Right ventricle myocardium inferior (tissue), 1 donor: ENCODE measurements at regions of chr4 and their contacts with region 1.

Region 1: GRCh38 chr4:162645381-162645780 is 481.6 kb upstream of the FSTL5 start:
- DNase-seq: no peak
- ATAC-seq: no peak

Region 2: GRCh38 chr4:162523171-162523570 is 122.2 kb before region 1 on chr4:
- intact Hi-C with region 1: no loop called
- DNase-seq: no peak
- ATAC-seq: no peak

Region 3: DNA sequence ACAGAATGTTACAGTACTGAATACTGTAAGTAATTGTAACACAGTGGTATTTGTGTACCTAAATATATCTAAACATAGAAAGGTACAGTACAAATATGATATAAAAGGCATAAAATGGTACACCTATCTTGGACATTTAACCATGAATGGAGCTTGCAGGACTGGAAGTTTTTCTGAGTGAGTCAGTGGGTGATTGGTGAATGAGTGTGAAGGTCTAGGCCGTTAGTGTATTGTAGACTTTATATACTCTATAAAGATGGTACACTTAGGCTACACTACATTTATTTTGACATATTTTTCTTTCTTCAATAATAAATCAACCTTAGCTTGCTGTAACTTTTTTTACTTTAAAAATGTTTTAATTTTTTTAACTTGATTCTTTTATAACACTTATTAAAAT is 59.1 kb before region 1 on chr4:
- intact Hi-C with region 1: no loop called
- DNase-seq: no peak
- ATAC-seq: no peak

Region 4: GRCh38 chr4:163042306-163042705 is 396.9 kb after region 1 on chr4:
- intact Hi-C with region 1: loop called (anchors 5 kb)
- DNase-seq: no peak
- ATAC-seq: no peak

Region 5: DNA sequence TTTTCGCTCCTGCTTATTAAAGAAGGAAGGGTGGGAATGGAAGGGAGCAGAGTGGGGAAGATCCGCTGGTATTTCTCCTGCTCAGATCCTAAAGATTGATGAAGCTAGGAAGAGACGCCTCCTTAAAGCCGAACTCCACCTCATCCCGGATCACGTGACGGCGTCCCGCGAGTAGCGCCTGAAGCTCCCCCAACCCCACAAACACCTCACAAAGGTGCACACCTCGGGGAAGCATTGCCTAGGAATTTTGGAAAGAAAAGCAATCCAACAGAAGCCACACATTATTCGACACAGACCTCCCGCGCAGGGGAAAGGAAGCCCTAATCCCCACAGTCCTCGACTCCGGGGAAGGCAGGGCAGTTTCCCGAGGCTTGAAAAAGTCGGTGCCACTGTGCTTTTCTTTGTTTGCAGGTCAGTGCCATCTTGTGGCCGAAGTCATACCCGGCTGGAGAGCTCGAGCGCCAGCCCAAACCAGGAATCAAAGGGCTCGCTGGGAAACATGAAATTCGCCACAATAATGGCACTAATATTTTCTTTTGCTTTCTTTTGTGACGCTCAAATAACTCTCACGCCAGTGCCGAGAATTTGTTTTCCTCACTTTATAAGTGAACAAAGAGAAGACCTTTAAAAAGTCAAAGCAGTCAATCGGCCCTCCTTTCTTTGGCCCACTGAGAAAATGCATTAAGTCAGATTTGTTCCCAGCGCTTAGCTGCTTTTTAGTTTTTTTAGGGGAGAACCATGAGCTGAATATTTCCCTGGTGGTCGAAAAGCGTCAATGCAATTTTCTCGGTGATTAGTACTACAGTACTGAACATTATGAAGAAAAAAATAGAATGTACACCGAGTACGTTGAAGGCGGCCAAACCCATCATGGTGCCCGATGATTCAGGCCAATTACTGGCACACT is 687.4 kb after region 1 on chr4 and contains the start of gene NPY1R:
- intact Hi-C with region 1: loop called (anchors 5 kb)
- DNase-seq: peak; percentile 65
- ATAC-seq: peak; percentile 89
- total RNA-seq, gene NPY1R: 0.46 TPM